Activated CD8-positive, alpha-beta T cell treated with anti-CD3 and anti-CD28 coated beads, Interleukin-2, amount 10 ng/mL, durations not matched to agents 7 days and 5 days (primary cell): ENCODE measurements at regions of chr11 and their contacts with region 1.

Region 1: DNA sequence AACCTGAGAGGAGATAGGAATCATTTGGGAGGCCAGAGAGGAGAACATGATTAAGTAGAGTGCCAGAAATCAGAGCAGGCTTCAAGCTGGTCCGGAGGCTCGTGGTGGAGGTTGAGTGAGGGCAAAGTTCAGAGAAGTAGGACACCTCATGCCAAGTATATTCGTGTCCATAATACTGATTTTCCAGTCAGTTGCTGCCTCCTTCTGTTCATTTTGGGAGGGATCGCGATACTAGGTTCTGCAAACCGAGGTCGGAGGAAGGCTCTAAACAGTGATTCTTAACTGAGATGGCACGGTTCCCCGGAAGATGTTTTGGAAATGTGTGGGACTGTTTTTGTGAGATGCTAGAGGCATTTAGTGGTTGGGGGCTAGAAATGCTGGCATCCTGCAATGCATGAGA is 13.6 kb upstream of the CD3E start:
- DNase-seq: peak; percentile 68
- ATAC-seq: peak; percentile 88
- H3K4me3 Mint-ChIP-seq: no peak overlapping the region
- H3K27ac Mint-ChIP-seq: peak overlapping the region; percentile 7
- H3K4me1 Mint-ChIP-seq: peaks cover 30% of the 10 kb centered on the region
- H3K27me3 Mint-ChIP-seq: no peaks in the 10 kb centered on the region

Region 2: DNA sequence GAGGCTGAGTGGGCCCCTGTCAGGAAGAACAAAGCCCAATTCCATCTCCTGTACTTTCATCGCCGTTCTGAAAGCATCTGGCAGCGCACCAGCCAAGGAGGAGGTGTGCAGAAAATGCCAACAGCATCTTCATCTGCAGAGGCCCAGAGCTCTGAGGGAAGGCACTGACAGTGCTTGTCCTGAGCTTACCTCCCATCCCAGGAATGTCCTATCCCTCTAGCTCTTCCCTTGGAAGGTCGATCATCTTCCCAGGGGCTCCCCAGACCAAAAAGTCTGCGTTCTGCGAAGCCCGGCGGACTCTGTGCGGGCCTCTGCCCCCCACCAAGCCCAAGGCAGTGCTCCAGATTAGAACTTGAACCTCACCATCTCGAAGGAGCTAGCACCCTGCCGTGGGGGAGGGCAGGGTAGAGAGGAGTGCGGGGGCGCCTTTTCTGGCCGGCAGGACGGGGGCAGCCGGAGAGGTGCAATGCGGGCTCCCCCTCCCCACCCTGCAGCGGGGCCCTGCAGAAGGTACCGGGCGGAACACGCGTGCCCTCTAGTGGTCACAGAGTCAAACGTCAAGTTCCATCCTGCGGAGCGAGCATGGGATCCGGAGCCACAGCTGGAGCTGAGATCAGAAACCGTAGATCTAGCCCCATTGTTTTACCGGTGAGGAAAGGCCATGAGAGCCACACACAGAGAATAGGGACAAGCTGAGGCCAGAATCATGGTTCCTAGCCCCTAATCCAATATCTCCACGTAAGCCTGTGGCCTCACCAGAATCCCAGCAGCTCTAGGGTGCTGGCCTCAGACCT is 119.5 kb before region 1 on chr11:
- CTCF ChIA-PET with region 1: interaction called, 13 read pairs
- POLR2A ChIA-PET with region 1: no interaction called
- DNase-seq: peak; percentile 82
- ATAC-seq: peak; percentile 90
- H3K4me3 Mint-ChIP-seq: no peak overlapping the region
- H3K27ac Mint-ChIP-seq: no peak overlapping the region
- H3K4me1 Mint-ChIP-seq: peaks cover 10% of the 10 kb centered on the region
- H3K27me3 Mint-ChIP-seq: peaks cover 16% of the 10 kb centered on the region

Region 3: DNA sequence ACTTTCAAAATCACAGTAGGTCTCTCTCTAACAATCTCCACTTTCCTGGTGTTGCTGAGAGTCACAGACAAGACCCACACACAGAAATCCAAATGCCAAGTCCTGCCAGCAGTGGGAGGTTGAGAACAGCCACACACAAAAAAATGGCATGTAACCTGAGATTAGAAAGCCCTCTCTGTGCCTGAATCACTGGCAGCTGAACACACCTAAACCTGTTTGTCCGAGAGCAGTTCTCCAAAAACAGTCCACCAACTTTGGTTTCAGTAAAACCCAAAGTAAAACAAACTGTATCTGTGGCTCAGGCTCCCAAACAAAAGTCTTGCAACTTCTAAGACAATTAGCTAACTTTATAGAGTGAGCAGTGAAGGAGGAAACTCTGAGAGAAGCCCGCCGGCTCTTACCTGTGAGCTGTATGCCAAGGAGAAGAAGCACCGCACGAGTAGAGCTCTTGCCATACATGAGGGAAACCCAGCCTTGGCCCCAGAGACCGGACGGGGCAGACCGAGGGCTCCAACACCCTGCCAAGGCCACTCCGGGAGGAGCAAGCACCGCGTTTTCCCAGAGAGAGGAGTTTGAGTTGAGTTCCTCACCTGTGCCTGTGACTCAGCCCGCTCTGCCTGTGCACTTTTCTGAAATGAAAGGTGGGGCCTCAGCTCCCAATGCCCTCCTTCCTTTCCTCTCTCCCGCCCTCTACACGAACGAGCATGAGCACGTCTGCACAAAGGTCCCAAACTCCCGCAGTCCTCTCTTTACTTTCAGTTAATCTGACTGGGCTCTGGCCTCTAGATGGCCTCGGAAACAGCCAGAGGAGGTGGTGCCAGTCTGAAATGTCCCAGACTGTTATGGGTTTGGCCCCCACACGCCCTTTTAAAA is 27.0 kb before region 1 on chr11 and contains the start of gene MPZL2:
- CTCF ChIA-PET with region 1: interaction called, 46 read pairs
- POLR2A ChIA-PET with region 1: interaction called, 3 read pairs
- DNase-seq: peak; percentile 55
- ATAC-seq: peak; percentile 73
- H3K4me3 Mint-ChIP-seq: peak within 1 kb of the TSS; percentile 77
- H3K27ac Mint-ChIP-seq: peak within 1 kb of the TSS; percentile 23
- H3K4me1 Mint-ChIP-seq: peaks cover 65% of the 10 kb centered on the region
- H3K27me3 Mint-ChIP-seq: peaks cover 3% of the 10 kb centered on the region
- total RNA-seq, gene MPZL2: 11.7 to 12.2 TPM

Region 4: DNA sequence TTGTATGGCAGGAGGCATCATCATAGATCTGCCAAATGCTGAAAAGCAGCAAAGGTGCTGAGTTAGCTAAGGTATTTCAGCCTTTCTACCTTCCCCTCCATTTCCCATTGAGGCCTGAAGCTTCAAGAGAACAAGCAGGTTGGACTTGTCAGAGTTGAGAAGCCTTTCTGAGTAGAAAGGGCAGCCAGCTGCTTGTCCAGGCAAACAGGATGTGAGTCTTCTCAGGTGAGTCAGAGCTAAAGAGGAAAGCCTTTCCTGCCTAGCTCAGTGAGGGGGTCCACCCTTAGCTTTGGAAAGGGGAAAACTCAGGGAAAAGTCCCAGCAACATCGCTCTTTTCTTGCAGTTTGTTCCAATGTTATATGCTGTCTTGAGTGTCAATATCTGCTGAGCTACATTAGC is 13.6 kb before region 1 on chr11:
- CTCF ChIA-PET with region 1: interaction called, 132 read pairs
- POLR2A ChIA-PET with region 1: no interaction called
- DNase-seq: peak; percentile 43
- ATAC-seq: peak; percentile 55
- H3K4me3 Mint-ChIP-seq: no peak overlapping the region
- H3K27ac Mint-ChIP-seq: no peak overlapping the region
- H3K4me1 Mint-ChIP-seq: peaks cover 53% of the 10 kb centered on the region
- H3K27me3 Mint-ChIP-seq: no peaks in the 10 kb centered on the region

Region 5: GRCh38 chr11:118304568-118305248 is 13.8 kb after region 1 on chr11 and contains the start of gene CD3E:
- CTCF ChIA-PET with region 1: interaction called, 132 read pairs
- POLR2A ChIA-PET with region 1: interaction called, 23 read pairs
- DNase-seq: peak; percentile 87
- ATAC-seq: peak; percentile 82
- H3K4me3 Mint-ChIP-seq: peak within 1 kb of the TSS; percentile 99
- H3K27ac Mint-ChIP-seq: peak within 1 kb of the TSS; percentile 99
- H3K4me1 Mint-ChIP-seq: peaks cover 64% of the 10 kb centered on the region
- H3K27me3 Mint-ChIP-seq: no peaks in the 10 kb centered on the region
- total RNA-seq, gene CD3E: 515 to 530 TPM

Region 6: GRCh38 chr11:118592616-118593367 is 301.9 kb after region 1 on chr11:
- CTCF ChIA-PET with region 1: no interaction called
- POLR2A ChIA-PET with region 1: no interaction called
- DNase-seq: no peak
- ATAC-seq: no peak
- H3K4me3 Mint-ChIP-seq: no peak overlapping the region
- H3K27ac Mint-ChIP-seq: no peak overlapping the region
- H3K4me1 Mint-ChIP-seq: peaks cover 23% of the 10 kb centered on the region
- H3K27me3 Mint-ChIP-seq: no peaks in the 10 kb centered on the region

Region 7: DNA sequence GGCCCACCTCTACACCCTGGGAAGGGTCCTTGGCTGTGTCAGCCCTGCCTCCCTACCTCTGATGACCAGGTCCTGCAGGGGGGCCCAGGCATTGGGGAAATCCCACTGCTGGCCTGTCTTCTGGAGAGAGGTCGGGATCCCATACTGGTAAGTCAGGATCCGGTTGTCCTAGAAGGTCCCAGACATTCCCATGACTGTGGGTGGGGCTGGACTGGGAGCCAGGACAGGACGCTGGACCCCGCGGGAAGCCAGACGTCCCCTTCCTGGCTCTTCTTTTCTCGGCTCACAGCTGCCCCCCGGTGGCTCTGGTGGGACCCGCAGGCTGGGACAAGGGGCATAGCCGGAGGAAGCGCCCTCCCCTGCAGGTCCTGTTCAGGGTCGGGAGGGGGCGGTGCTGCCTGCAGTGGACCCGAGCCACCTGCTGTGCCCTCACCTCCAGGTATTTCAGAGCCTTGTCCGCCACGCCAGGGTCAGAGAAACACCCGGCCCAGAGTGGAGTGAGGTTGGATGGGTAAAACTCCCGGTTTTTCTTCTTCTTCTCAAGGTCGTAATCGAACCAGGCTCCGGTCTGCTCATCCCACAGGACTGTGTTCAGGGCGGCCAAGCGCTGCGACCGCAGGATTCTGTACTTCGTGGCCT is 368.5 kb after region 1 on chr11:
- CTCF ChIA-PET with region 1: no interaction called
- POLR2A ChIA-PET with region 1: no interaction called
- DNase-seq: peak; percentile 94
- ATAC-seq: peak; percentile 94
- H3K4me3 Mint-ChIP-seq: no peak overlapping the region
- H3K27ac Mint-ChIP-seq: no peak overlapping the region
- H3K4me1 Mint-ChIP-seq: peaks cover 9% of the 10 kb centered on the region
- H3K27me3 Mint-ChIP-seq: no peaks in the 10 kb centered on the region